Caco-2 (cell line): ENCODE measurements at regions of chr4 and their contacts with region 1.

Region 1: GRCh38 chr4:7462509-7462971 is 27.8 kb upstream of the PSAPL1 start:
- DNase-seq: peak; percentile 68 to 71
- H3K4me3 ChIP-seq: no peak overlapping the region
- H3K4me3 Mint-ChIP-seq: no peak overlapping the region
- H3K27ac Mint-ChIP-seq: no peak overlapping the region
- H3K4me1 ChIP-seq: no peaks in the 10 kb centered on the region
- H3K4me1 Mint-ChIP-seq: peaks cover 6% of the 10 kb centered on the region
- H3K27me3 ChIP-seq: no peaks in the 10 kb centered on the region
- H3K27me3 Mint-ChIP-seq: no peaks in the 10 kb centered on the region
- CTCF ChIP-seq: peak; percentile 57 to 59

Region 2: DNA sequence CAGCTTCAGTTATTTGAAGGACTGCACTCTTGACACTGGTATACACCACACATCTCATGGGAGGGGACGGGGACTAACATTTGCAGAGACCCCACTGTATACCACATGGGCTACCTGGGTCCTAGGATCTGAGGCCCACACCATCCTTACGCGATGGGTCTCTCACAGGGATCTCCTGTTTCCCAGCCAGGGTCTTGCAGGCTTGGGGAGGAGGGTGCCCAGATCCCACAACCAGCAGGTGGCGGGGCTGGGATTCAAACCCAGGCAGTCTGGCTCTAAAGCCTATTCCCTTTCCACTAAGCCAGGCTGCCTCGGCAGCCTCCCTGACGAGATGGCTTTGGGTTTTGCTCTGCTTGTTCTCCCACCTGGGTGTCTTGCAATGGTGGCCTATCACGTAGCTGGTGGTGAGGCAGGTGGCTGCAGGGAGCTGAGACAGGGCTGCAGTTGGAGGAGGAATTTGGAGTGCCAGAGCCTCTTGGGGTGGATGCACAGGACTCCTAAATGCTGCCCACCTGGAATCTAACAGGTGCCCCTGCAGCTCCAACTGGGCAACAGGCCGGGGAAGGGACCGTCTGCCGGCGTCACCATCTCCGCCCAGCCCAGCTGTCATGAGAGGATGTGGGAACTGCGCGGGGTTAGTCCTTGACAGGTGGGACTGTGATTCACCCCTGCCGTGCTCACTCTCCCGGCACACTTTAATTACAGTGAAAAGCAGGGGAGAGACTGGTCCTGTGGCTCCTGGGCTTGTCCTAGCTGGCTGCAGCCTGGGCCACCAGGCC is 138.5 kb before region 1 on chr4:
- CTCF ChIA-PET with region 1: no interaction called
- POLR2A ChIA-PET with region 1: no interaction called
- intact Hi-C with region 1: loop called (anchors 1 kb)
- DNase-seq: peak in 1 of 2 experiments; percentile 40
- H3K4me3 ChIP-seq: no peak overlapping the region
- H3K4me3 Mint-ChIP-seq: no peak overlapping the region
- H3K27ac Mint-ChIP-seq: no peak overlapping the region
- H3K4me1 ChIP-seq: no peaks in the 10 kb centered on the region
- H3K4me1 Mint-ChIP-seq: peaks cover 9% of the 10 kb centered on the region
- H3K27me3 ChIP-seq: no peaks in the 10 kb centered on the region
- H3K27me3 Mint-ChIP-seq: no peaks in the 10 kb centered on the region
- CTCF ChIP-seq: peak in 1 of 2 experiments; percentile 11

Region 3: GRCh38 chr4:7394673-7395451 is 67.7 kb before region 1 on chr4:
- CTCF ChIA-PET with region 1: interaction called, 4 read pairs
- POLR2A ChIA-PET with region 1: no interaction called
- intact Hi-C with region 1: loop called (anchors 1 kb)
- DNase-seq: peak in 1 of 2 experiments; percentile 26
- H3K4me3 ChIP-seq: no peak overlapping the region
- H3K4me3 Mint-ChIP-seq: no peak overlapping the region
- H3K27ac Mint-ChIP-seq: no peak overlapping the region
- H3K4me1 ChIP-seq: no peaks in the 10 kb centered on the region
- H3K4me1 Mint-ChIP-seq: no peaks in the 10 kb centered on the region
- H3K27me3 ChIP-seq: no peaks in the 10 kb centered on the region
- H3K27me3 Mint-ChIP-seq: no peaks in the 10 kb centered on the region
- CTCF ChIP-seq: no peak

Region 4: GRCh38 chr4:7434766-7435150 is 27.8 kb before region 1 on chr4 and contains the start of gene PSAPL1:
- CTCF ChIA-PET with region 1: no interaction called
- POLR2A ChIA-PET with region 1: no interaction called
- intact Hi-C with region 1: loop called (anchors 1 kb)
- DNase-seq: peak; percentile 79 to 90
- H3K4me3 ChIP-seq: no peak within 1 kb of the TSS
- H3K4me3 Mint-ChIP-seq: peak within 1 kb of the TSS; percentile 72
- H3K27ac Mint-ChIP-seq: peak within 1 kb of the TSS; percentile 98
- H3K4me1 ChIP-seq: peaks cover 63% of the 10 kb centered on the region
- H3K4me1 Mint-ChIP-seq: peaks cover 32% of the 10 kb centered on the region
- H3K27me3 ChIP-seq: no peaks in the 10 kb centered on the region
- H3K27me3 Mint-ChIP-seq: no peaks in the 10 kb centered on the region
- CTCF ChIP-seq: no peak
- total RNA-seq, gene PSAPL1: 14.3 and 14.7 TPM in 2 replicates